ENCODE measurements at regions of chr2 and their contacts with region 1.

Region 1: DNA sequence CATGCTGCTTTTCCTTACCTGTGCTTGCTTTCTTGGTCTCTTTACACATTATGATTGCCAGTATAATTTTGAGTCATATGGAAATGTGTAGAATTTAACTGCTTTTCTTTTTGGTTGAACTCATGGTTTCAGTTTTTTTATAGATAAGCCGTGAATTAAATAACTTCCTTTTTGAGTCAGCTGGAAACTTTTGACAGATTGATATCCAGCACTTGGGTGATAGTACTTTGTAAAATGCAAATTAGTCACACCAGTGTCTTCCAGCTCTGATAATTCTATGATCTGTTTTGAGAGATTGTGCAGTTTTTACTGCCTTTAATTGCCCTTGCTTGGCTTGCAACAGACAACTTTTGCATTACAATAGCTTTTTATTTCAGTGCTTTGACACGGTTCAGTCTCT is 86.4 kb downstream of the NCOA1 start:
- DNase-seq: no peak
- H3K4me3 Mint-ChIP-seq: peak overlapping the region; percentile 49
- H3K27ac Mint-ChIP-seq: peak overlapping the region; percentile 93
- H3K4me1 Mint-ChIP-seq: peaks cover 70% of the 10 kb centered on the region
- H3K27me3 Mint-ChIP-seq: no peaks in the 10 kb centered on the region

Region 2: DNA sequence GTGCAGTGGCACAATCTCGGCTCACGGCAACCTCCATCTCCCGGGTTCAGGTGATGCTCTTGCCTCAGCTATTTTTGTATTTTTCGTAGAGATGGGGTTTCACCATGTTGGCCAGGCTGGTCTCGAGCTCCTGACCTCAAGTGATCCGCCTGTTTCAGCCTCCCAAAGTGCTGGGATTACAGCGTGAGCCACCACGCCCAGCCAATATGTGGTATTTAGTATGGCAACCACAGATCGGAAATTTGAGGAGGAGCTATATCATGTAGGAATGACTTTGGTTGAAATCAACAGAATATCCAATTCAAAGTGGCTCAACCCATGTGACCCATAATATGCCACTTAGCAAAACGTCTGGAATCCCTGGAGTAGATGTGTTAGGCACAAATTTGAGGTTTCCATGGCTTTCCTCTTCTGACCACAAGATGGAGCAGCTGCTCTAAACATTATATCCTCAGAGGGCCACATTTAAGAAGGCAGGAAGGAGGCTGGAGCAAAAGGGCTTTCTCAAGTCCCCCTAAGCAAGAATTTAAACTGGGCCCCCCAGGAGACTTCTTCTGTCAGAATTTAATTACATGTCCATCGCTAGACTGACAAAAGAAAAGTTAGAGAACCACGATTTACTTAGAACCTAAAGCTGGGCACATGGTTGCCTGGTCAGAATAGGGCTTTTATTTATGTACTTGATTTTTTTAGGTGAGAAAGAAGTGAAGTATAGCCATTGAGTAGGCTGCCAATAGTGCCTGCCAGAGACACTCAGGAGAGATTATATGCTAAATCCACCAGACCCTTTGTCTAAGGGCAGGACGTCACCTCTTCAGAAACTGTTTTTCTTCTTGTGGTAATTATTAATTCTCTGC is 167.6 kb before region 1 on chr2:
- intact Hi-C with region 1: loop called (anchors 10 kb)
- DNase-seq: peak; percentile 19
- H3K4me3 Mint-ChIP-seq: no peak overlapping the region
- H3K27ac Mint-ChIP-seq: no peak overlapping the region
- H3K4me1 Mint-ChIP-seq: peaks cover 1% of the 10 kb centered on the region
- H3K27me3 Mint-ChIP-seq: peaks cover 5% of the 10 kb centered on the region

Region 3: DNA sequence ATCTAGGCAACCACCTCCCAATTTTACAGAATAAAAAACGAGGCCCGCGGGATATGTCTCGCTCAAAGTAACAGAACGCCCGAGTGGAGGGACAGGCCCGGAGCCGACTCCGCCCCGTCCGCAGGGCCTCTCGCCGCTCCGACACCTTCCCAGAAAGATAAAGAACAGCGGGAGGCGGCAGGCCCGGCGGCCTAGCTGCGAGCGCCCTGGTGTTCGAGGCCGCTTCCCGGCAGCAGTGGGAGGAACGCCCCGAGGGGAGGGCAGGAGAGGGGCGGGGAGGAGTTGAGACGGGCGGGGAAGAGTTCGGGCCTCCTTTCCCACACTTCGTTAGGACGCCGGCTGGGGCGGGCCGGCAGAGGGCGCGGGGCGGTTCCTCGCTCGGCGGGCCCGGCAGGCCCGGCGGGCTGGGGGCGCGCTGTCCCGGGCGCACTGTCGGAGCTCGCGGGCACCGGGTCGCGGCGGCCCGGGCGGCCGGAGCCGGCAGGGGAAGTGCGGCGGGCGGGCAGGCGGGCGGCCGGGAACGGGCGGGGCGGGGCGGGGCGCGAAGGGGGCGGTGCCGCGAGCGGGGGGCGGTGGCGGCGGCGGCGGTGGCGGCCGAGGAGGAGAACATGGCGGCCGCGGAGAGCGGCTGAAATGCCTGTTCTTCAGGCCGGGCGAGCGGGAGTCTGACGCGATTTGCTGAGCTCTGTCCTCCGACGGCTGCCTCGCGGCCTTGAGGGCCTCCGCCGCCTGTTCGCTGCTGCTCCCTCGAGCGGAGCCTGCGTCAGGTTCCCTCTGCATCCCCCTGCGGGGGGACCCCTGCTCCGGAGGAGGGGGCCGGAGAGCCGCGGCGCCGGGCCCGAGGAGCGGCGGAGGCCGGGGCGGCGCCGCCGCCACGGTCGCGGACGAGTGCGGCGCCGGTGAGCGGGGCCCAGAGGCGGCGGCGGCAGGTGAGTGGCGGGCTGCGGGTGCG is 86.5 kb before region 1 on chr2 and contains the start of gene NCOA1:
- intact Hi-C with region 1: loop called (anchors 2 kb)
- DNase-seq: peak; percentile 88
- H3K4me3 Mint-ChIP-seq: peak within 1 kb of the TSS; percentile 93
- H3K27ac Mint-ChIP-seq: peak within 1 kb of the TSS; percentile 92
- H3K4me1 Mint-ChIP-seq: peaks cover 44% of the 10 kb centered on the region
- H3K27me3 Mint-ChIP-seq: peaks cover 4% of the 10 kb centered on the region
- total RNA-seq, gene NCOA1: 28.2 and 28.3 TPM in 2 replicates

Region 4: DNA sequence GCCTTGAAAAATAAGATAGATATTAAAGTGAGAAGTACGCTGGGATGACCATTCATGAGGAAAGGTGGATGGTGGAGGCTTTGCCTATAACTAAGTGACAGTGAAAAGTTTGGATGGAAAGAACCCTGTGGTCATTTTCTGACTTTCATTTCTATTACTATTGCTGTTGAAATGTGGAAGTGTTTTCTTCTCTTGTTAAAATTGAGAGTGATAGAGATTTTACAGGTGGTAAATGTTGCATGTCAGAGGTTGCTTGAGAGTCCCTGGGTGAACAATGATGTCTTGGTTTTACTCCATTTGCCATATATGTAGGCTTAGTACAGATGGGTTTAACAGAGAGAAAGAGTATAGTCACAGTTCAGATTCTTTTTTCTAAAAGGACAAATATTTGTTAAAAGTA is 68.1 kb before region 1 on chr2:
- intact Hi-C with region 1: loop called (anchors 5 kb)
- DNase-seq: no peak
- H3K4me3 Mint-ChIP-seq: no peak overlapping the region
- H3K27ac Mint-ChIP-seq: peak overlapping the region; percentile 40
- H3K4me1 Mint-ChIP-seq: peaks cover 46% of the 10 kb centered on the region
- H3K27me3 Mint-ChIP-seq: no peaks in the 10 kb centered on the region

Region 5: DNA sequence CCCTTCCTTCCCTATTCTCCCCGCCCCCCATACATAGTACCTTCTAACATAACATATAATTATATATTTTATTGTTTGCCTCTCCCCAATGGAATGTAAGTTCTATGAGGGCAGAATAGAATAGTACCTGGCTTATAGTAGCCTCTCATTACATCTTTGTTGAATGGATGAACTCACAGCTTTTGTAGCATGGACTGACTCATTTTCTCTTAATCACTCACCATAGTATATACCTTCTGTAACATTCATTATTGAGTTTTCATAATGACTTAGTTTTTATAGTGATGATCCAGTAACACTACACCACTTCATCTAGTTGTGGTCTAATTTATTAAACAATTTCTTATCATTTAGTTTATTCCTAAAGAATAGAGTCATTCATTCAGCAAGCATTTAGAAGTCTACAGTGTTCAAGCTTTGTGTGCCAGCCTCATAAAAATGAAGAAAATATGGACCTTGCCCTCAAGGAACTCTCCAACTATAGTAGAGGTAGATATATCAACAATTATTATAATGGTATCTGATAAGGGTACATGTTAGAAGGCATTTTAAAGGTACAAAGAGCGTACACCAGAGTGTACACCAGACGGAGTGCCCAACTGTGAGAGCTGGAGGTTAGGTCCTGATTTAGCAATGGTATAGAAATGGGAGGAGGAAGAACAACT is 55.4 kb before region 1 on chr2:
- intact Hi-C with region 1: loop called (anchors 1 kb)
- DNase-seq: no peak
- H3K4me3 Mint-ChIP-seq: no peak overlapping the region
- H3K27ac Mint-ChIP-seq: peak overlapping the region; percentile 84
- H3K4me1 Mint-ChIP-seq: peaks cover 39% of the 10 kb centered on the region
- H3K27me3 Mint-ChIP-seq: no peaks in the 10 kb centered on the region

Region 6: DNA sequence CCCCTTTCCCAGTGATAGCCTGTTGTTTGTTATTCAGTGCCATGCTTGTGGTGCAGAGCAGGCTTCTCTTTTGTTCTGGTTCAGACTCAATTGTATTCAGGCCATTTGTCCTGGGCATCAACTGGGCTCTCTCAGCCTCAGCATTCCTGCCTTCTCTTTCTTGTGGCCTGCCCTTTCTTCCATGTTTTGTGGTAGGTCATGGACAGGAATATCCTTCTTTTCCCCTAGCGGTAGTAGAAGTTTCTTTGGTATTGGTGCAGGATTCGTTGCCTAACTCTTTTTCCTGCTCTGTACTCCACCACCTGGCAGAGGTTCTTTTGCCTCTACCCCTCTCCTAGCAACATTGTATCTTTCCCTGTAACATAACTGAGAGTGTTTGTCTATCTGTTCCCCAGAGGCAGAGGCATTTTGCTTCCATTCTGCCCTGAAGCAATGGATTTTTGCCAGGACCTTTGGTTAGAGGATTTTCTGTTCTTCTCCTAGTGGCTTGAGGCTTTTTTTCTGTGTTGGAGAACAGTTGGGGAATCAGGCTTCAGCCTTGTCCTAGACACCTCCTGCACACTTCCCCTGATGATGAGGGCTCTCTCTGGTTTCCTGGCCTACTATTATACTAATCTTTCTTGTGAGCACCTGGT is 17.9 kb before region 1 on chr2:
- intact Hi-C with region 1: no loop called
- DNase-seq: no peak
- H3K4me3 Mint-ChIP-seq: no peak overlapping the region
- H3K27ac Mint-ChIP-seq: no peak overlapping the region
- H3K4me1 Mint-ChIP-seq: no peaks in the 10 kb centered on the region
- H3K27me3 Mint-ChIP-seq: no peaks in the 10 kb centered on the region

Region 7: DNA sequence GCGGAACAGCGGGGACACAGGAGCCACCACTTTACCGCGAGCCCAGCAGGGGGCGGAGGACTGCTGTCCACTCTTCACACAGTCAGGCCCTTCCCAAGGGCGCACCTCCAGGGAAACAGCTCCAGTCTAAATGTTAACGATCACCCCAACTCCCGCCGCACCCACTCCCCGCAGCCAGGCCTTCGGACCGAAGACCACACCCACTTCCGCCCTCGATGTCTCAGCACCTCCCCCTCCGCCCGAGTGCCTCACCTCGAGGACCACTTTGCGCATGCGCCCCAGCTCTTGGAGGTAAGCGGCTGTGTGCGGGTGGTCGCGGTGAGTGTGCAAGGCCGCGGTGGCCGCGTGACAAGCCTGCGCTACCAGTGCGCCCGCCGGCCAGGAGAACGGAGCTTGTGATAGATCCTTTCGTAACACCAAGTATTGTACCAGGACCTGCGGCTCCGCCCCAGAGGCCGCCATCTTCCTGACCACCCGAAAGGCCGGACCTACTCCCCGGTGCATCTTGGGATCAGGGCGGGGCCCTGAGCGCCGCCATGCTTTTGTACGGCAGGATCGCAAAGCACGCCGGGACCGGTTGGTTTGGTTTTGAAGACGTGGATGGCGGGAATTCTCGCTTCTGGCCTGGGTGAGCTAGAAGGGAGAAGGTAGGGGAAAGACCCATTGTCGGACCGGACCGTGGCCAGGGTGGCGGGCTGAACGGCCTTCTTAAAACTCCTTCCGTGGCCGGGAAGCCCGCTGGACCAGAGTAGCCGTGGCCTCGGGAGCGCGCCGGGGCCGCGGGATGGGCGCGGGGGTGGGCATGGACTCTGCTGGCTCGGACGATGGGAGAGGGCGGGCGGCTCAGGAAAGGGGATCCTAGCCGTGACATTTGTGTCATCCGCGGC is 215.6 kb after region 1 on chr2 and contains the starts of genes CENPO and PTRHD1:
- intact Hi-C with region 1: loop called (anchors 2 kb)
- DNase-seq: peak; percentile 93
- H3K4me3 Mint-ChIP-seq: peak within 1 kb of the TSS; percentile 95
- H3K27ac Mint-ChIP-seq: peak within 1 kb of the TSS; percentile 99
- H3K4me1 Mint-ChIP-seq: peaks cover 38% of the 10 kb centered on the region
- H3K27me3 Mint-ChIP-seq: no peaks in the 10 kb centered on the region
- total RNA-seq, gene CENPO: 41.8 and 46.4 TPM in 2 replicates
- total RNA-seq, gene PTRHD1: 25.9 and 26.6 TPM in 2 replicates

Region 8: DNA sequence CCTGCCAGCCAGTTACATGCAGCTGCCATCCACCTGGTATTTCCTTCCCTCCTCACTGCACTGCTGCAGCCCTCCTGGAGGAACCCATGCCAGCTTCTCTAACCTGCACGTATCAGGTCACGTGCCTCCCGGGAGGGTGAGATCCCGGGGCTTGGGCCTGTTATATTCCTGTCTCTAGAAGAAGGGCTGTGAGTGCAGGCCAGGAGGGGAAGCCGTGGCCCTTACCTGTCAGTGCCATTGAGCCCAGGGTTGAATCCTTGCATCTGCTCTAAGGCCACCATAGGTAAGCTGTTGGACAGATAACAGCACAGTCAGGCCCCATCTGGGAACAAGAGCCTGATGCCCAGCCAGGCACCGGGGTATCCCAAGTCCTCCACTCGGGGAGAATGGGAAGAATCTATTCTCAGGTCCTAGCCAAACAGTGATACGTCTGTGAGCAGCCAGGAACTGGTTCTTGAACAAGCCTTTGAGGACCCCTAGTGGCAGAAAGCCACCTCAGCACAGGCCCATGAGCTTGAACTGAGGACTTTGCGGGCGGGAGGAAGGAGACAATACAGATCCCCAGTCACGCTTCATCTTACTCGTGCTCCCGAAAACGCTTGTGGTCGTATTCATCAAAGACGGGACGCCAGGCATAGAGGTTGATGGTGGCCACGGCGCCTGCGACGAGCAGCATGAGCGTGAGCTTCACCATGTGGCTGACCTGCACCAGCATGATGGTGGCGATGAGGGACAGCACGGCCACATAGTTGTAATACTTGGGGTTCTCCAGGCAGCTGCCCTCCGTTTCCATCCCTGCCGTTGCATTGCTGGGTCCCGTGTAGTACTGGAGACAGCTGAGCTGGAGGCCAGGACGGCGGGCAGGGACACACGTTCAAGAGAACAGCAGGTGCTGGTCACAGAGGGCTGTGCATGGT is 250.1 kb after region 1 on chr2:
- intact Hi-C with region 1: loop called (anchors 5 kb)
- DNase-seq: peak; percentile 61
- H3K4me3 Mint-ChIP-seq: no peak overlapping the region
- H3K27ac Mint-ChIP-seq: peak overlapping the region; percentile 93
- H3K4me1 Mint-ChIP-seq: peaks cover 21% of the 10 kb centered on the region
- H3K27me3 Mint-ChIP-seq: no peaks in the 10 kb centered on the region

Measured in activated T-helper 2 cell treated with anti-CD3 and anti-CD28 coated beads, Interferon-gamma antibody, Interleukin-2, Interleukin-4, amounts not matched to agents 10 μg/mL and 5 μg/mL and 100 μg/mL, durations not matched to agents 14 hours and 24 hours and 36 hours (primary cell).